Esophagus muscularis mucosa (tissue), 4 donors: ENCODE measurements at regions of chr1 and their contacts with region 1.

Region 1: DNA sequence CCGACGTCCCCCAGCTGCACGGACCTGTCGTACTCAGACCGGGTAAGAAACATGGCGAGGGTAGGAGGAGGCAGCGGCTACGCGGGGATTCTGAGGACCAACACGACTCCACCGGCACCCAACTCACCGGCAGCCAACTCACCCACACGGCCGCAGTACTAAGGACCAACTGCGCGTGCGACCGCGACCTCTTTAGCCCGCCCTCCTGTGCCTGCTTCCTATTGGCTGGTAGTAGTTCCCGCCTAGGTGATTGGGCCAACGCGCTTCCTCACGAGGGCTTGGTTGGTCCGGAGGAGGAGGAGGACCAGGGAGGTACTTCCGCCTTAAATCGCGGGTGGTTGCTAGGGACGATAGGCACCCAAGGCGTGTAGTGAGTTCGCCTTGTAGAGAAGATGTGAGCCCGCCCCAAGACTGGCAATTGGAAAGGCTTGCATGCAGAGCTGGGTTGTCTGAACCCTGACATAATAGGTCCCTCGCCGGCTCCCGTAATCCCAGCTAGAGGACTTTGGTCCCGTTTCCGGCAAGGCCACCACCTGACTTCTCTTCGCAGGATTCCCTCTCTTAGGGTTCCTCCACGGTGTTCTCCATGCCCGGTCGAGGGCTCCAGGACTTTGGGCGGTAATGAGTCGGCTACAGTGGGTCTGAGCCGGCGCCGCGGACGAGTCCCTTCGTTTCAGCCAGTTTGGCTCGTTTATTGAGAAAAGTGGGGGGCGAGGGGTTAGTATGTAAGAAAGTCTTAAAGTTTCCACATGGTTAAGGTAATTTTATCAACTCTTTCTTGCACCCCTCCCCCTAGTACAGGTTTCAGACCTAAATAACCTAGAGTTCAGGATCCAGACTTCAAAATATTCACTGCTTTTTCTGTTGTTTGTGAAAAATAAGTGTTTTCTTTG is at the start of gene PSMA5:
- DNase-seq: peak; percentile 99
- H3K4me3 ChIP-seq: peak within 1 kb of the TSS; percentile 80 to 95 (median 90)
- H3K27ac ChIP-seq: peak within 1 kb of the TSS; percentile 84 to 94 (median 90)
- H3K4me1 ChIP-seq: peaks cover 31 to 51% (median 47%) of the 10 kb centered on the region in 4 donors
- H3K27me3 ChIP-seq: no peaks in the 10 kb centered on the region
- CTCF ChIP-seq: peak in 1 of 3 experiments; percentile 27
- EP300 ChIP-seq: no peak
- POLR2A ChIP-seq: peak; percentile 71
- total RNA-seq, gene PSMA5: 15.8 to 29.8 (median 27.4) TPM

Region 2: GRCh38 chr1:109213785-109214468 is 212.6 kb before region 1 on chr1 and contains the start of gene SARS1:
- intact Hi-C with region 1: no loop called
- DNase-seq: peak; percentile 96
- H3K4me3 ChIP-seq: peak within 1 kb of the TSS; percentile 76 to 92 (median 82)
- H3K27ac ChIP-seq: peak within 1 kb of the TSS; percentile 91 to 97 (median 93)
- H3K4me1 ChIP-seq: peaks cover 26 to 45% (median 43%) of the 10 kb centered on the region in 4 donors
- H3K27me3 ChIP-seq: no peaks in the 10 kb centered on the region
- CTCF ChIP-seq: no peak
- EP300 ChIP-seq: no peak
- POLR2A ChIP-seq: peak; percentile 86
- total RNA-seq, gene SARS1: 125 to 180 (median 144) TPM

Region 3: GRCh38 chr1:109466452-109467300 is 40.2 kb after region 1 on chr1 and contains the start of gene SYPL2:
- intact Hi-C with region 1: loop called (anchors 5 kb)
- DNase-seq: no peak
- H3K4me3 ChIP-seq: peak within 1 kb of the TSS; percentile 75 to 95 (median 80)
- H3K27ac ChIP-seq: peak within 1 kb of the TSS; percentile 80 to 90 (median 87)
- H3K4me1 ChIP-seq: peaks cover 4 to 37% (median 33%) of the 10 kb centered on the region in 4 donors
- H3K27me3 ChIP-seq: peaks cover 0 to 11% (median 0%) of the 10 kb centered on the region in 4 donors
- CTCF ChIP-seq: no peak
- EP300 ChIP-seq: no peak
- POLR2A ChIP-seq: peak; percentile 37
- total RNA-seq, gene SYPL2: 2.7 to 8.0 (median 4.6) TPM

Region 4: DNA sequence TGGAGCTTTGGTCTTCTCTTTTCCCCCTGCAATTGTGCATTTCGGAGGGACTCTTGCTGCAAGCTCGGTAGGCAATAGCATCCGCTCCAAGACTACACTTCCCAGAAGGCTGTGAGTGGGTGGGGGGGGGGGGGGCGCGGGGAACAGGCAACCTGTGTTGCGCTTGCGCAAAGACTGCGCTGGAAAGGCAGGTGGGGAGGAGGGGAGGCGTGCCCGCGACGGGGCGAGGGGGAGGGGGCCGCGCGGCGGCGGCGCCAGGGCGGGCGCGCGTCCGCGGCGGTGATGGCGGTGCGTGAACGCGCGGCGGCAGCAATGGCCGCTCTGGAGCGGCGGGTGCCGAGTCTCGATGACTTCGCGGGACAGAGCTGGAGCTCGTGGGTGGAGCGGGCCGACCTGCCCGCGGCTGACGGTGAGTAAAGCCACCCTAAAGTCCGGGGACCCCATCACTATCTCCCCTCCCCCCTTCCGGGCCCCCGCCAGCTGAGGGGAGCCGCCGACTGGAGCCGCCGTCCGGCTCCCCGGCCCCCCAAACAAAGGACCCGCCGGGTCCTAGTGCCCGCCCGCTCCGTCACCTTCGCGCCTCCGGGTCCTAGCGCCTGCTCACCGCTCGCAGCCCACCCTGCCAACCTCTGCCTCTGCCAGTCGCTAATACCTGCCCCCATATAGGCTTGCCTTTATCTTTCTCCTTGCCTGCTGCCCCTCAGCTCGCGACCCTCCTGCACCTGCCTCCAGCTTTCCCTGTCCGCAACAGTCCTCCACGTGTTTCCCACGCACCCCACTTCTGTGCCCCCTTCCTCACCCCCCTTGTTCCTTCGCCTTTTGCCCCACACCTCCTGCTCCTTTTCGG is 57.4 kb after region 1 on chr1 and contains the start of gene ATXN7L2:
- intact Hi-C with region 1: loop called (anchors 5 kb)
- DNase-seq: peak; percentile 98
- H3K4me3 ChIP-seq: peak within 1 kb of the TSS; percentile 76 to 94 (median 82)
- H3K27ac ChIP-seq: peak within 1 kb of the TSS; percentile 87 to 97 (median 96)
- H3K4me1 ChIP-seq: peaks cover 16 to 25% (median 24%) of the 10 kb centered on the region in 4 donors
- H3K27me3 ChIP-seq: no peaks in the 10 kb centered on the region
- CTCF ChIP-seq: no peak
- EP300 ChIP-seq: no peak
- POLR2A ChIP-seq: peak; percentile 9
- total RNA-seq, gene ATXN7L2: 2.2 to 3.3 (median 2.7) TPM

Region 5: GRCh38 chr1:109493805-109494539 is 67.4 kb after region 1 on chr1 and contains the start of gene CYB561D1:
- intact Hi-C with region 1: no loop called
- DNase-seq: peak; percentile 96
- H3K4me3 ChIP-seq: peak within 1 kb of the TSS; percentile 74 to 91 (median 82)
- H3K27ac ChIP-seq: peak within 1 kb of the TSS; percentile 76 to 87 (median 84)
- H3K4me1 ChIP-seq: peaks cover 23 to 61% (median 44%) of the 10 kb centered on the region in 4 donors
- H3K27me3 ChIP-seq: no peaks in the 10 kb centered on the region
- CTCF ChIP-seq: peak in 2 of 3 experiments; percentile 93 to 94
- EP300 ChIP-seq: no peak
- POLR2A ChIP-seq: no peak
- total RNA-seq, gene CYB561D1: 6.2 to 16.4 (median 8.2) TPM

Region 6: GRCh38 chr1:109532365-109533136 is 106.0 kb after region 1 on chr1:
- intact Hi-C with region 1: loop called (anchors 5 kb)
- DNase-seq: no peak
- H3K4me3 ChIP-seq: peak overlapping the region; percentile 7 to 43 (median 20)
- H3K27ac ChIP-seq: peak overlapping the region; percentile 7 to 65 (median 56)
- H3K4me1 ChIP-seq: peaks cover 32 to 47% (median 32%) of the 10 kb centered on the region in 4 donors
- H3K27me3 ChIP-seq: no peaks in the 10 kb centered on the region
- CTCF ChIP-seq: peak; percentile 47 to 99 (median 98)
- EP300 ChIP-seq: no peak
- POLR2A ChIP-seq: no peak